HEK293T (cell line): ENCODE measurements at regions of chr4 and their contacts with region 1.

Region 1: GRCh38 chr4:77203380-77204197 is 46.6 kb downstream of the CCNG2 start:
- DNase-seq: peak; percentile 74

Region 2: DNA sequence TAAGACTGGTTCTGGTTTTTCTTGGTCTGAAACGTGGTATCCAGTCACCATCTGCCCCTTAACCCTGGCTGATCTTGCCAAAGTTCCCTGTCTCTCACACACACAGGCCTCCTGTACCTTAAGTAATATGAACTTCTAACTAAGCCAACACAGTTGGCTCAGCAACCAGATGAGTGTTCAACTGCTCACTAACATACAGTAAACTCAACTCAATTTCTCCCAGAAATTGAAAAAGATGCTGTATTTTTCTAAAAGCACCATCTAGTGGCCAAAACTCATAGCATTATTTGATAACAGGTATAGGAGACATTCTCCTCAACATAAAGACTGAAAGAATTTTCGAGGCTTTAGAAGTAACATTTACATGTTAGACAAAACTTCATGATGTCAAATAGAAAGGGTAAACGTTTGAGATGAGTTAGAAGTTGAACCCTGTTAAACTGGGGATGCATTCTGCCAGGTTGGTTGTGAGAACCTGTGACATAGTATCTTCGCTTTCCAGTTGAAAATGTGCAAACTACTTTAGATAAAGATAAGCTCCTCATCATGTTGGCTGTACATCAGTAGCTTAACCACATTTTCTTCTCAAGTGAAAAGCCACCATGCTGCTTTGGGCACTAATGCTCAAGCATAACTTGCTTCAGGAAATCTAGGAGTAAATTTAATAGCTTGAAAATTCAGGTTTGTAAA is 159.0 kb before region 1 on chr4:
- CTCF ChIA-PET with region 1: interaction called, 14 read pairs
- POLR2A ChIA-PET with region 1: no interaction called
- DNase-seq: peak; percentile 16

Region 3: GRCh38 chr4:77052352-77052751 is 151.2 kb before region 1 on chr4:
- CTCF ChIA-PET with region 1: interaction called, 19 read pairs
- POLR2A ChIA-PET with region 1: no interaction called
- DNase-seq: peak; percentile 46

Region 4: GRCh38 chr4:77095101-77095821 is 108.3 kb before region 1 on chr4:
- CTCF ChIA-PET with region 1: interaction called, 38 read pairs
- POLR2A ChIA-PET with region 1: interaction called, 5 read pairs
- DNase-seq: peak; percentile 72

Region 5: GRCh38 chr4:77174426-77174825 is 29.2 kb before region 1 on chr4:
- CTCF ChIA-PET with region 1: no interaction called
- POLR2A ChIA-PET with region 1: no interaction called
- DNase-seq: no peak